RWPE1 (cell line): ENCODE measurements at regions of chr11 and their contacts with region 1.

Region 1: DNA sequence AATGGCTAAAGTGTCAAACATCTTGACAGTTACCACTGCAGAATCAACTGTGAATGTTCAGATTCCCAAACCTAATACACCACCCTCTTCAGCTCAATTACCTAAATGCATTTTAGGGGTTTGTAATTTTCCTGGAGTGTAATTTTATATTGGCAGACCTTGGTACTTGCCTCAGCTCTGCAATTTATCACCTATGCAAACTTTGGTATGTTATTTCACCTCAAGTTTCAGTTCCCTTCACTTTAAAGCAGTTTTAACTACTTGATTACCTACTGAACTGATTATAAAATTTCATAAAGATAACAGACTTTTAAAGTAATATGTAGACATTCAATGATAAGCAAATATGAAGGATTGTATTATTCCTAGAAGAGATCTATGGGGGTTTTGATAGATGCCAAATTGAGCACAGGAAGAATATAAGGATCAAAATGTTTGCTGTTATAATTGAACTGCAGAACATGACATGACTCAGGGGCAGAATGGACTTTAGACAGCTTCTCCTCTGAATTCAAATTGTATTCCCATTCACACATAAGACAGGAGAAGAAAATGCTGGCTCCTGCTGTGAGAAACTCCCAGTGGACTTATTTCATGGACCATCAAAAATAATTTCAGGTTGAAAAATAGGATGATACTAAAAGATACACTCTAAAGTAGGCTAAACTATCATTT is 491.5 kb upstream of the LUZP2 start:
- DNase-seq: no peak
- H3K27ac ChIP-seq: no peak overlapping the region
- CTCF ChIP-seq: no peak

Region 2: GRCh38 chr11:23520226-23520960 is 484.9 kb before region 1 on chr11:
- CTCF ChIA-PET with region 1: interaction called, 10 read pairs
- POLR2A ChIA-PET with region 1: no interaction called
- DNase-seq: no peak
- H3K27ac ChIP-seq: no peak overlapping the region
- CTCF ChIP-seq: no peak